ENCODE measurements at regions of chr19 and their contacts with region 1.

Region 1: DNA sequence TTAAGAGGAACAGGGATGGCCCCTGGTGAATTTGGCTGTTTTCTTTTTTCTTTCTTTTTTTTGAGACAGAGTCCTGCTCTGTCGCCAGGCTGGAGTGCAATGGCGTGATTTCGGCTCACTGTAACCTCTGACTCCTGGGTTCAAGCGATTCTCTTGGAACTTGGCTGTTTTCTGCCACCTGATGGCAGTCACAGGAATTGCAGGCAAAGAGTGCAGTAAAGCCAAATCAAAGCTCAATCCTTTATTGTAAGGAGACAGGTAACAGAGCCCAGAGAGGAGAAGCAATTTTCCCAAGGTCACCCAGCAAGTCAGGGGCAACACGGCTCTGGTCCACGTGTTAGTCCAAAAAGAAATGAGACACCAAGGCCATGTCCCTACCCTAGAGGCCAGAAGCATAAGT is 6.2 kb downstream of the TINCR start:
- DNase-seq: no peak
- H3K4me3 ChIP-seq: no peak overlapping the region
- H3K27ac ChIP-seq: no peak overlapping the region
- H3K4me1 ChIP-seq: peaks cover 0 to 9% (median 4%) of the 10 kb centered on the region in 4 experiments; a peak in 3 of 7 replicates
- H3K27me3 ChIP-seq: peaks cover 0 to 4% (median 1%) of the 10 kb centered on the region in 4 experiments; a peak in 5 of 7 replicates
- CTCF ChIP-seq: peak; percentile 16 to 74 (median 44)
- EP300 ChIP-seq: no peak
- POLR2A ChIP-seq: no peak
- RAD21 ChIP-seq: peak; percentile 41 to 49

Region 2: DNA sequence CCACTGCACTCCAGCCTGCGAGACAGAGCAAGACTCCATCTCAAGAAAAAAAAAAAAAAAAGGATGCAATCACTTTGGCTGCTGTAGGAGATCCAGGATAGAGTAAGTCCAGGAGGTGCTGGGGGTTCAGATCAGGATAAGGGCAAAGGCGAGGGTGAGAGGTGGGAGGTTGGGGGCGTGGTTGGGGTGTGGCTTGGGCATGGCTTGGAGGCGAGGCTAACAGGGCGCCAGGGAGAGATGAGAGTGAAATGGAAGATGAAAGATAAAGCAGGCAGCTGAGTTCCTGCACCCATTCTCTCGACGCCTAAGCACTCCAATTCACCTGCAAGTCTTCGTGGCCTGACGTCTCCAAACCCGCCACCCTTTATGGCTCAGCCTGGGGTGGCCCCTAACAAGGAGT is 131.3 kb before region 1 on chr19:
- CTCF ChIA-PET with region 1: no interaction called
- POLR2A ChIA-PET with region 1: no interaction called
- DNase-seq: peak in 1 of 2 experiments; percentile 77
- H3K4me3 ChIP-seq: no peak overlapping the region
- H3K27ac ChIP-seq: no peak overlapping the region
- H3K4me1 ChIP-seq: peaks cover under 1 to 5% (median 3%) of the 10 kb centered on the region in 4 experiments; a peak in 4 of 7 replicates
- H3K27me3 ChIP-seq: peaks cover 0 to 4% (median 0%) of the 10 kb centered on the region in 4 experiments; a peak in 2 of 7 replicates
- CTCF ChIP-seq: no peak
- EP300 ChIP-seq: no peak
- POLR2A ChIP-seq: no peak
- RAD21 ChIP-seq: no peak

Region 3: DNA sequence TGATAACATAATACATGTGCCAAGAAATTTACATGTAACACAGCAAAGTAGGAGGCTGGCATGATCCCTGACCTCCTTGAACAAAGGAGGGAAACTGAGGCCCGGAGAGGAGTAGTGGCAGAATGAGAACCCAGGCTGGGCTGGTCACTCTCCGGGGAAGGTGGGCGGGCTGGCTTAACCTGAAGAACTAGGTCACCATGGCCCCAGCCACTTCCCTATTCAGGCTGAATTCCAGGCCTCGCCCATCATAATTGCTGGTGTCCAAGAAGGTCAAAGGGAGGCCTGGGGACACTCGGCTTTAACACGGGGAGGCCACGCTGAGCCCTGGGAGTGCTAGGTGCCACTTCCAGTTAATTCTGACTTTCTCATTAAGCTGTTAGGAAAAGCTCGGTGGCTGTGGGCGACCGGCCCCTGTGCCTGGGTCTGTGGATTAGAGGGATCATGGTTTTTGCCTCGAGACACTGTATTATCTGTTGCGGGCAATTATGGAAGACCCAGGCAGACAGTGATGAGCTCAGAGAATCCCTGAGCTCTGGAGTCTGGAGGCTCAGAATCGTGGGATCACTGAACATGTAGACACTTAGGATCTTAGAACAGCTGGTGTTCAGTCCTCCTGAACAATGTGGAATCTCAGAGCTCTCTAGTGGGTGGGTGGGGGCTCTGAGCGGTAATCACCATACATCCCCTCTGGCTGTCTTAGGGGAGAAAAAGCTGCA is 11.2 kb after region 1 on chr19:
- CTCF ChIA-PET with region 1: interaction called, 20 read pairs
- POLR2A ChIA-PET with region 1: interaction called, 3 read pairs
- DNase-seq: no peak
- H3K4me3 ChIP-seq: no peak overlapping the region
- H3K27ac ChIP-seq: no peak overlapping the region
- H3K4me1 ChIP-seq: no peaks in the 10 kb centered on the region; a peak in 1 of 7 replicates
- H3K27me3 ChIP-seq: peaks cover 0 to 5% (median 3%) of the 10 kb centered on the region in 4 experiments; a peak in 4 of 7 replicates
- CTCF ChIP-seq: no peak
- EP300 ChIP-seq: no peak
- POLR2A ChIP-seq: no peak
- RAD21 ChIP-seq: no peak

Region 4: DNA sequence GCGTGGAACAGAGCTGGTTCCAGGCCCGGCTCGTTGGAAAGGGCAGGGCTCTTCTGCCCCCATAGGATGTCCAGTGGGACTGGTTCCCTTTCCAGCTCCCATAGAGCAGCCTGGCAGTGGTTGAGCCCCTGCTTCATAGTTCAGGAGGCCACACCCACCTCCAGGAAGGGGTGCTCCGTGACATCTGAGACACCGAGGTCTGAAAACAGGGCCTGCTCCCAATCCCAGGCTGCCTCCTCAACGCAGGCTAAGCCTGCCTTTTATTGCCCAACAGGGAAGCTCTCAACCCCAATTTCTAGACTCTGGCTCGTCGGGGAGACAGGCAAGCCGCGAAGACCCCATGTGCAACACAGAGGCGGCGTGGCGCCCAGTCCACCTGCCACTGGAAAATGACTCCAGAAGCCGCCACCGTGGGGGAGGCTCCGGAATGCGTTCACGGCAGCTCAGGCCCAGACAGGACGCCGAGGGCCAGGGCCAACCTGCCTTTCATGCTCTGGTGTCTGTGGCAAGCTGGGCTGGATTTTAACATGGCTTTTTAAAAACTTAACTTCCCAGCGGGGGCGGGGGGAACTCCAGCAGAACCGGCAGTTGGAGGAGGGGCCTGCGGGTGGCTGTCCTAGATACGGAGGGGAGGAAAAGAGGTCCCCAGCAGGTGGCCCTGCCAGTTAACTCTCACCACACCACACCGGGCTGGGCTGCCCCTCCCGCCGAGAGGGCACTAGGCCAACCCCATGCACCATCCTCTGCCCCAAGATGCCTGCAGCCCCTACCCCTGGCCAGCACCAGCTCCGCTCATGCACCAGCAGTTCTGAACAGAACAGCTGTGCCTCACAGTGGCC is 24.1 kb after region 1 on chr19:
- CTCF ChIA-PET with region 1: interaction called, 10 read pairs
- POLR2A ChIA-PET with region 1: interaction called, 3 read pairs
- DNase-seq: peak in 1 of 2 experiments; percentile 85
- H3K4me3 ChIP-seq: peak overlapping the region in 3 of 4 experiments; percentile 6 to 52 (median 24); a peak in 4 of 8 replicates
- H3K27ac ChIP-seq: no peak overlapping the region; the same call in 1 of the 2 replicates
- H3K4me1 ChIP-seq: peaks cover 0 to 21% (median 16%) of the 10 kb centered on the region in 4 experiments; a peak in 6 of 7 replicates
- H3K27me3 ChIP-seq: no peaks in the 10 kb centered on the region
- CTCF ChIP-seq: no peak
- EP300 ChIP-seq: no peak
- POLR2A ChIP-seq: no peak
- RAD21 ChIP-seq: no peak

Measured in H1 (cell line).